HEK293T (cell line): ENCODE measurements at regions of chr1 and their contacts with region 1.

Region 1: DNA sequence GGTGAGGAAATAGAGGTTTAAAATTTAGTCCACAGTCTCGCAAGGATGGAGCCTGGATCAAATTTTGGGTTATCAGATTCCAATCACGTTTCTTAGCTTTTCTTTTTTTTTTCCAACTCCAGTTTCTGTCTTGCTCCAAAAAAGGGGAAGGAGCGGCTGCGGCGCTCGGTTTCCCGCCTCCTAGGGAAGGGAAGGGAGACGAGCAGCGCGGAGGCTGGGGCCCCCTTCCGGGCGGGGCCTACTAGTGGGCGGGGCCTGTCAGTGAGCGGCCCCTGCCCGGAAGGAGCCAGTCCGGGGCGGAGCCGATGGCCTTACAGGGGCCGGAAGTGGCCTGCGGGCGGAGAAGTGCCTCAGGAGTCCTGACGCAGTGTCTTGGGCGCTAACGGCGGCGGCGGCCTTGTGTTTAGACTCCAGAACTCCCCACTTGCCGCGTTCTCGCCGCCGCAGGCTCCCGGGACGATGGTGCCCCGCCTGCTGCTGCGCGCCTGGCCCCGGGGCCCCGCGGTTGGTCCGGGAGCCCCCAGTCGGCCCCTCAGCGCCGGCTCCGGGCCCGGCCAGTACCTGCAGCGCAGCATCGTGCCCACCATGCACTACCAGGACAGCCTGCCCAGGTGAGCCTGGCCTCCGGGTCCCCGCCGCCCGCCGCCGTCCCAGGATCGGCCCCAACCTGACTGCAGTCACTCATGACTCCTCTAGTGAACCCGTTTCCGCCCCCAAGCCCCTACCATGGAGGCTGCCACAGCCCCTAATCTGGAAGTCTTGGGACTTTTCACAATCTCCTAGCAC is at the start of gene CPT2:
- DNase-seq: peak; percentile 99

Region 2: GRCh38 chr1:53089478-53090226 is 107.0 kb before region 1 on chr1:
- CTCF ChIA-PET with region 1: no interaction called
- POLR2A ChIA-PET with region 1: no interaction called
- DNase-seq: no peak

Region 3: DNA sequence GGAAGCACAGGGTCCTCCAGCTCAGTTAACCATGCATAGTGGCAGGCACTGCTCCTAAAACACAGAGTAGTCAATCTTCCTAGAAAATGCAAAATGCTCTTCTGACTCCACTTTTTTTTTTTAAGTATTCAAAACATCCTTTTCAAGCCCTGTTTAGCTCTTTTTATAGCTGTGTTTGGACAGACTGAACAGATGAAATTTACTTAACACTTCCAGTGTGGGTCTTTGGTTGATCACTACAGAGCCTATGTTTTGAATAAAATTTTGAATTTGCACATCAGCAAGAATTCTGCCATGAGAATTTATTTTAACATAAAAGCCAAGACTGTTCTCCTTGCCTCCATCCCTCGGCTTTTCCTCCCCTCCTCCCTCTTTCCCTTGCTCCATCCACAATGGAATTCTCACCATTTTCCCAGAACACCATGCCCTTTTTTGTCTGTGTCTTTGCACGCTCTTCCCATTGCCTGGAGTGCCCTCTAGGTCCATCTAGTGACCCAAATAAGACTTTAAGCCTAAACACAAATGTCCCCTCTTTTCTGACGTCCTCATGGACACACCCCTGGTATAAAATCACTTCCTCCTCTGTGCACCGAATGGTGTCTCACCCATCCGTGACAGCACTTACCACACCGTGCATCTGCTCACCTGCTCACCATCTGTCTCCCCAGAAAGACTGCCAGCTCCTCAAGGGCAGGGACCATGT is 24.1 kb before region 1 on chr1:
- CTCF ChIA-PET with region 1: no interaction called
- POLR2A ChIA-PET with region 1: no interaction called
- DNase-seq: no peak

Region 4: DNA sequence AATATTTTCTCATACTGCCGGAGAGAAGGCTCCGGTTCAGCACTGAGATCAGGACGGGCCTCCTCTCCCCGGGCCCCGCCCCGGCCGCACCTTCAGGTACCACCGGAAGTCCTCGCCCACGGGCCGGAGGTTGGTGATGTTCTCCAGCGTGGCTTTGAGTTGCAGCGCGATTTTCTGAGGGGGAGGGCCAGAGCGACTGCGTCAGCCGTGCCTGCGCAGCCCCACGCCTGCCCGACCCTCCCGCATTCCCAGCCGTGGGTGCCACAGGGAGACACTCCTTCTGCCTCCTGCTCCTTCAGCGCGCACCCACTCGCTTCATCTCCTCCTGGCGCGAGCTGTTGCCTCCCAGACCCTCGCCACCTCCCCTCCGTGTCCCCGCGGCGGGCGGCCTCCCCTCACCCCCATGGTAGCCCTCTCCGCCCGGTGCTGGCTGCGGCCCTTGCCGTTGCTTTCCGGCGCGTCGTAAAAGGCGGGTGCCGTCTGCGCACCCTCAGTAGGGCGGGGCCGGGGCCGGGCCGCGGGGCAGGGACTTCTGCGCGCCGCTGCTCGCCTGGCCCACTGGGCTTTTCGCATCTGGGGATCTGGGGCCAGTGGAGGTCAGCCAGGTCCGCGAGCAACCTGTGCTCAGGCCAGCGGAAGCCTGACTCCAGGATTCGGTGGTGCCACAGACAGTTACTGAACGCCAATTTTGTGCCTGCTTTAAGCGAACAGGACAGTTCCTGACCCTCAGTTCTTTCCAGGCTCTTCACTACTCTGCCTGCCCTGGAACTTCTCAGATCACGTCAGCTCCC is 23.7 kb after region 1 on chr1 and contains the start of gene CZIB:
- CTCF ChIA-PET with region 1: interaction called, 3 read pairs
- POLR2A ChIA-PET with region 1: interaction called, 10 read pairs
- DNase-seq: peak; percentile 90